Activated CD4-positive, alpha-beta T cell treated with anti-CD3 and anti-CD28 coated beads for 36 hours (primary cell): ENCODE measurements at regions of chr17 and their contacts with region 1.

Region 1: GRCh38 chr17:39235555-39236449 is 10.1 kb upstream of the STAC2 start:
- DNase-seq: peak; percentile 78
- ATAC-seq: peak; percentile 84
- H3K4me3 Mint-ChIP-seq: no peak overlapping the region
- H3K27ac Mint-ChIP-seq: no peak overlapping the region
- H3K4me1 Mint-ChIP-seq: peaks cover 41% of the 10 kb centered on the region
- H3K27me3 Mint-ChIP-seq: peaks cover 5% of the 10 kb centered on the region

Region 2: DNA sequence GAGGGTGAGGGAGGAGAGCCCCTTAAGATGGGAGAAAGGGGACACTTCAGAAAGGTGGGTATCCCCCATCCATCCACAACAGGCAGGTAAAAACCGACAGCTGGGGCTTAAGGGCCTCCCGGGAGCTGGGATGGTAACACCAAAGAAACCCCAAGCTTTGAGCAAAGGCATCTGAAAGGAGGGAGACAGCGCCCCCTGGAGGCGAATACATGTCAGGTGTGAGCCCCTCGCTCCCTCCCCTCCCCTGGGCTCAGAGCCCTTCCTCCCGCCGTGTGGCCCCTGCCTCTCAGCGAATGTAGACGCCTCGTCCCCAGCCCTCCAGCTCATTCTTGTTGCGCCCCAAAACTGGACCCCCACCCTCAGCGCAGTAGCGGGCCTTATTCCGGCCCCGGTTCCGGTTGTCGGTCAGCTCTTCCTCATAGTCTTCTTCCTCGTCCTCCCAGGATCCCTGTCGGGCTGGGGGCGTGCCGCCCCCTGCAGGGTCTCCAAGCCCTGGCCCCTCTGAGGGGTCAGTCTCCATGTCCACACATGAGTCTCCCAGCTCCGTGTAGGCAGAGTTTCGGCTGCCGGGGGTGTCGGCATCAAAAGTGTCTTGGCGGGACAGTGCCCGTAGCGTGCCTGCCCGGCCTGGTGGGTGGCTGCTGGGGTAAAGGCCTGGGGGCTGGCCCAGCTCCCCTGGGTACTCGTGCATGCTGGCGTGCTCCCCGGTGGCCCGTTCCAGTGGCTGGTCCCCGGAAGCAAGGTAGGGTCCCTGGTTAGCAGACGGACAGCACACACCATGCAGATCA is 60.7 kb before region 1 on chr17:
- CTCF ChIA-PET with region 1: interaction called, 10 read pairs
- POLR2A ChIA-PET with region 1: no interaction called
- intact Hi-C with region 1: no loop called
- DNase-seq: peak; percentile 87
- ATAC-seq: peak; percentile 88
- H3K4me3 Mint-ChIP-seq: no peak overlapping the region
- H3K27ac Mint-ChIP-seq: no peak overlapping the region
- H3K4me1 Mint-ChIP-seq: peaks cover 9% of the 10 kb centered on the region
- H3K27me3 Mint-ChIP-seq: no peaks in the 10 kb centered on the region

Region 3: DNA sequence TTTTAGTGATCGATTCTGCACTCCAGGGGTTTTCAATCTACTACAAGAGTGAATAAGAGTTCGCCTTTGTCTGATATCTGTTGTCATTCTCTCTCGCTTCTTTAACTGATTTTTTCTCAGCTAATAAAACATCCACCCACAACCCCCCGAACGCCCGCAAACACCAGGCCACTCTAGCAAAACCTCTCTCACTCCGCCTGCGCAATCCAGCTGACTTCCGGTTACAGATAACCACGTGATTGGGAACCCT is 36.1 kb before region 1 on chr17:
- CTCF ChIA-PET with region 1: interaction called, 170 read pairs
- POLR2A ChIA-PET with region 1: interaction called, 10 read pairs
- intact Hi-C with region 1: no loop called
- DNase-seq: peak; percentile 95
- ATAC-seq: peak; percentile 69
- H3K4me3 Mint-ChIP-seq: peak overlapping the region; percentile 98
- H3K27ac Mint-ChIP-seq: peak overlapping the region; percentile 100
- H3K4me1 Mint-ChIP-seq: peaks cover 51% of the 10 kb centered on the region
- H3K27me3 Mint-ChIP-seq: no peaks in the 10 kb centered on the region

Region 4: GRCh38 chr17:39209317-39210092 is 26.3 kb before region 1 on chr17:
- CTCF ChIA-PET with region 1: interaction called, 170 read pairs
- POLR2A ChIA-PET with region 1: interaction called, 10 read pairs
- intact Hi-C with region 1: loop called (anchors 1 kb)
- DNase-seq: peak; percentile 89
- ATAC-seq: peak; percentile 76
- H3K4me3 Mint-ChIP-seq: peak overlapping the region; percentile 38
- H3K27ac Mint-ChIP-seq: peak overlapping the region; percentile 24
- H3K4me1 Mint-ChIP-seq: peaks cover 32% of the 10 kb centered on the region
- H3K27me3 Mint-ChIP-seq: no peaks in the 10 kb centered on the region